ENCODE measurements at regions of chr17 and their contacts with region 1.

Region 1: GRCh38 chr17:49230636-49231562 is at the start of gene PHOSPHO1:
- DNase-seq: peak; percentile 71 to 94 (median 88)
- ATAC-seq: peak; percentile 93
- H3K4me3 ChIP-seq: peak within 1 kb of the TSS; percentile 69 to 91
- H3K4me3 Mint-ChIP-seq: peak within 1 kb of the TSS; percentile 83
- H3K27ac ChIP-seq: no peak within 1 kb of the TSS
- H3K27ac Mint-ChIP-seq: peak within 1 kb of the TSS; percentile 19
- H3K4me1 ChIP-seq: peaks cover 24% of the 10 kb centered on the region
- H3K4me1 Mint-ChIP-seq: peaks cover 14% of the 10 kb centered on the region
- H3K27me3 ChIP-seq: no peaks in the 10 kb centered on the region
- H3K27me3 Mint-ChIP-seq: peaks cover 4% of the 10 kb centered on the region
- CTCF ChIP-seq: no peak
- total RNA-seq, gene PHOSPHO1: not detected

Region 2: DNA sequence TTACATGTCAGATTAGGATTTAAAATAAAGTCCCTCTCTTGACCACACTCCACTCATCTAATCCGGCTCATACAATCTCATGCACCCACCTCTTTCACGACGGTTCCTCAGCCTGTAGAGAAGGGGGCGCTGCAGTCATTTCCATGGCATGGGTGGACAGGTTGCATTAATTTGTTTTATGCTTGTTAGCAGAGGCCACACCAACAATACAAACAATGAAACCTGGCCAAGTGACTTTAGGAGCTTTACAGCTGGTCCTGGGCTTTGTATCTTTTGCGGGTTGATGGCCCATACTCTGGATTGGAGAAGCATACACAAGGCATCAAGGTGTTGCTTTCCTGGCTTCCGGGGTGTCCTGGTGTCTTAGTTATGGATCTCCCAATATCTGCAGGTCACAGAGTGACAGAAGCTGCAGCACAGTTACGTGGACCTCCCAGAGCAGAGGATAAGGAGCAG is 276.6 kb before region 1 on chr17:
- CTCF ChIA-PET with region 1: no interaction called
- POLR2A ChIA-PET with region 1: no interaction called
- intact Hi-C with region 1: loop called in 1 of 2 experiments (anchors 5 kb)
- DNase-seq: peak in 1 of 9 experiments; percentile 13
- ATAC-seq: no peak
- H3K4me3 ChIP-seq: no peak overlapping the region
- H3K4me3 Mint-ChIP-seq: no peak overlapping the region
- H3K27ac ChIP-seq: no peak overlapping the region
- H3K27ac Mint-ChIP-seq: no peak overlapping the region
- H3K4me1 ChIP-seq: no peaks in the 10 kb centered on the region
- H3K4me1 Mint-ChIP-seq: peaks cover 4% of the 10 kb centered on the region
- H3K27me3 ChIP-seq: peaks cover 4 to 5% of the 10 kb centered on the region in 2 experiments
- H3K27me3 Mint-ChIP-seq: peaks cover 30% of the 10 kb centered on the region
- CTCF ChIP-seq: no peak

Region 3: DNA sequence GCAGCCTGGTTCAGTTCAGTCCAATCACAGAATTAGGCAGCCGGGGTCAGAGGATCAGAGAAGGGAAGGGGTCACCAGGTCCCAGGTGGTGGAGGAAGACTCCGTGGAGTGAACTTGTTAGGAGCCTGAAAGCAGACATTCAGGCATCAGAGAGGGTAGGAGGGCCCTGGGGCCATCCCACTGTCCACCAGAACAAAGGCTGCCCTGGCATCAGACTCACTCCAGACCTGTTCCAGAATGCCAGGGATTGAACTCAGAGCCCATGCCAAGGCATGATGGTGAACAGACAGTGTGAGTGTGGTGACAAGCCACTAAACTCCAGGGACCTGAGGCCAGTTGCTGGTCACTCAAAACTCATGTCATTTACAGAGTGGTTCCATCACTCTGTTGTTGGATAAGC is 60.7 kb before region 1 on chr17:
- CTCF ChIA-PET with region 1: interaction called, 47 read pairs
- POLR2A ChIA-PET with region 1: no interaction called
- intact Hi-C with region 1: no loop called
- DNase-seq: no peak
- ATAC-seq: no peak
- H3K4me3 ChIP-seq: no peak overlapping the region
- H3K4me3 Mint-ChIP-seq: no peak overlapping the region
- H3K27ac ChIP-seq: no peak overlapping the region
- H3K27ac Mint-ChIP-seq: no peak overlapping the region
- H3K4me1 ChIP-seq: no peaks in the 10 kb centered on the region
- H3K4me1 Mint-ChIP-seq: no peaks in the 10 kb centered on the region
- H3K27me3 ChIP-seq: no peaks in the 10 kb centered on the region
- H3K27me3 Mint-ChIP-seq: peaks cover 54% of the 10 kb centered on the region
- CTCF ChIP-seq: no peak

Region 4: DNA sequence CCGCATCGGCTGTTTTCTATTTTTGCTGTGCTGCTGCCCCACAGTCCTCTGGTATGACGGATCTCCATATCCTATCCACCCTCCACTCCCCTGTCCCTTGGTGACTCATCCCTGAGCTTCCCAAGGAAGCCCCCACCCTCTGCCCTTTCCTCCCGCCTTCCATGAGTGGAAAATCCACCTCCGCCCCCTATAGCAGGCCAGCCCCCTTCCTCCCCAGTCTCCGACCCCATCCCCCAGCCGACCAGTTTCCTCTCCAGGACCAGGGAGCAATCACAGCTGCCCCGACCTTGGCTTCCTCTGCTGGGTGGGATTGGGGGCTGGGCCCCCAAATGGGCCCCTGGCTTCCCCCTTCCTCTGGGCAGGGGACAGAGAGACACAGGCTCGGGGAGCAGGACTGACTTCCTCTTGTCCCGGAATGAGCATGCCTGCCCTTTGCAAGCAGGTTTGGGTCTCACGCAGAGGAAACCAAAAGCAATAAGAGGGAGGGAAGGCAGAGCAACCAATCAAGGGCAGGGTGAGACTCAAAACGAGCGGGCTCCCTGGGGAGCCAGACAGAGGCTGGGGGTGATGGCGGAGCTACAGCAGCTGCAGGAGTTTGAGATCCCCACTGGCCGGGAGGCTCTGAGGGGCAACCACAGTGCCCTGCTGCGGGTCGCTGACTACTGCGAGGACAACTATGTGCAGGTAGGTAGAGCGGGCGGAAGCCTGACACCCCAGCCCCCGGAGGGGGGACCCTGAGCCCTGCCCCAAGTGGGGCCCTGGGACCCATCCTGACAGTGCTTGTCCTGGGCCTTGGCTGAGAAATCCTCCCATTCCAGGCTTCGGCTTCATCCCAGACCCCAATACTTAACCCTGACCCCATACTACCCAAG is 20.5 kb before region 1 on chr17 and contains the starts of genes ABI3 and GNGT2:
- CTCF ChIA-PET with region 1: interaction called, 179 read pairs
- POLR2A ChIA-PET with region 1: interaction called, 5 read pairs
- intact Hi-C with region 1: no loop called
- DNase-seq: peak in 7 of 9 experiments; percentile 43 to 86 (median 69)
- ATAC-seq: peak; percentile 80
- H3K4me3 ChIP-seq: peak within 1 kb of the TSS; percentile 86 to 87
- H3K4me3 Mint-ChIP-seq: peak within 1 kb of the TSS; percentile 95
- H3K27ac ChIP-seq: peak within 1 kb of the TSS; percentile 61 to 63
- H3K27ac Mint-ChIP-seq: peak within 1 kb of the TSS; percentile 91
- H3K4me1 ChIP-seq: peaks cover 78% of the 10 kb centered on the region
- H3K4me1 Mint-ChIP-seq: peaks cover 71% of the 10 kb centered on the region
- H3K27me3 ChIP-seq: no peaks in the 10 kb centered on the region
- H3K27me3 Mint-ChIP-seq: no peaks in the 10 kb centered on the region
- CTCF ChIP-seq: no peak
- total RNA-seq, gene ABI3: 12.8 to 13.6 TPM
- total RNA-seq, gene GNGT2: 3.7 to 4.1 TPM

Region 5: DNA sequence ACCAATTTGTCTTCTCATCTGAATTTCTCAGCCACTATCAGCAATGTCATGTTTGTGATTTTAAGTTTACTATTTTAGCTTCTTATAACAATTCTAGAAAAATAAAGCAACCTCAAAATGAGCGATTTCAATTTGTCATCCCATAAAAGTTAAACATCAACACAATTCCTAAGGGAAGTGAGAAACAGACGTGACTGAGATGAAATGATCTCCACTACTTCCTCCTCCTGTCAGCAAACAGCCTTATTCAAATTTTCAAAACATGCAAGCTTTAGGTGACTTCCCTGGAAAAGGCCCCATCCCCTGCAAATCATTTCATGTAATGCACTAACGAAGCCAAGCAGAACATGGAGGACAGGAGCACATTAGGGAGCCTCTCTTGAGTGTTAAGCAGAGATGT is 66.2 kb after region 1 on chr17:
- CTCF ChIA-PET with region 1: interaction called, 11 read pairs
- POLR2A ChIA-PET with region 1: no interaction called
- intact Hi-C with region 1: no loop called
- DNase-seq: no peak
- ATAC-seq: no peak
- H3K4me3 ChIP-seq: no peak overlapping the region
- H3K4me3 Mint-ChIP-seq: no peak overlapping the region
- H3K27ac ChIP-seq: no peak overlapping the region
- H3K27ac Mint-ChIP-seq: no peak overlapping the region
- H3K4me1 ChIP-seq: no peaks in the 10 kb centered on the region
- H3K4me1 Mint-ChIP-seq: no peaks in the 10 kb centered on the region
- H3K27me3 ChIP-seq: no peaks in the 10 kb centered on the region
- H3K27me3 Mint-ChIP-seq: no peaks in the 10 kb centered on the region
- CTCF ChIP-seq: no peak

Region 6: GRCh38 chr17:49390548-49391324 is 159.8 kb after region 1 on chr17:
- CTCF ChIA-PET with region 1: interaction called, 3 read pairs
- POLR2A ChIA-PET with region 1: no interaction called
- intact Hi-C with region 1: loop called in 1 of 2 experiments (anchors 10 kb)
- DNase-seq: peak in 2 of 9 experiments; percentile 12 to 51
- ATAC-seq: no peak
- H3K4me3 ChIP-seq: no peak overlapping the region
- H3K4me3 Mint-ChIP-seq: peak overlapping the region; percentile 65
- H3K27ac ChIP-seq: peak overlapping the region in 1 of 2 experiments; percentile 88
- H3K27ac Mint-ChIP-seq: peak overlapping the region; percentile 94
- H3K4me1 ChIP-seq: peaks cover 51% of the 10 kb centered on the region
- H3K4me1 Mint-ChIP-seq: peaks cover 68% of the 10 kb centered on the region
- H3K27me3 ChIP-seq: no peaks in the 10 kb centered on the region
- H3K27me3 Mint-ChIP-seq: no peaks in the 10 kb centered on the region
- CTCF ChIP-seq: no peak